Endothelial cell of umbilical vein (primary cell): ENCODE measurements at regions of chrX and their contacts with region 1.

Region 1: DNA sequence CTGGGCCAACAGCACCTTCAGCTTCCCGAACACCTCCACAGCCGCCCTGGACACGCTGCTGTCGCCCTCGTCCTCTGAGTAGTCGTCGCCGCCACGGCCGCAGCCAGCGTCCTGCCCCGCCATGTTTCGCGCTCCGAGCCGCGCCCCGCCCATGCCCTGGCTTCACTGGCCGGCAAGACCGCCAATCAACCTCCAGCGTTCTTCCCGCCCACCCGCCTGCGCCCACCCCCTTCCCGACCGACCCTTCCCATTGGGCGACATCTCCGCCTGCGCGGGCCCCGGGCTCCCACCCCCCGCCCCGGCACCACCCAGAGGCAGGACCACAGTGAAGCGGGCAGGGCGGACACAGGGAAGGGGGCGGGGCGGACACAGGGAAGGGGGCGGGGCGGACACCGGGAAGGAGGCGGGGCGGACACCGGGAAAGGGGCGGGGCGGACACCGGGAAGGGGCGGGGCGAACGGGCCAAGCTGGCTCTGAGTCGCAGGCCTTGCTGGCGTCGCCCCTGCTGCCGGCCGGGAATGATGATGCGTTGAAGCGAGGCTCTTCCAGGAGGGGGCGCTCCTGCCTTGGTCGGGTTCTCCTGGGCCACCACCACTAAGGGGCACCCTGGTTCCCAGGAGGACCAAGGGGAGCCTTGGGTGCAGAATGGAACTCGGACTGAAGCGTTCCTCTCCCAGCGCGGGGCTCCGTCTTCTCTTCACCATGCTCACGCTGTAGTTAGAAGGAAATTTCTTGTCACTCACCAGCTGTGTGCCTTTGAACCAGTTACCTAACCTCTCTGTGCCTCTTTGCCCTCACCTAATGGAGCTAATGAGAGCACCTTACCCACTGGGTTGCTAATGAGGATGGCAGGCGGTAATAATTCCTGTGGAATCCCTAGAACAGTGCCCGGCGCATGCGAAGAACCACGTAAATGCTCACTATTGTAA is at the start of gene HAUS7:
- DNase-seq: peak; percentile 92
- H3K4me3 ChIP-seq: peak within 1 kb of the TSS; percentile 61 to 73 (median 64)
- H3K27ac ChIP-seq: peak within 1 kb of the TSS; percentile 53
- H3K4me1 ChIP-seq: peaks cover 15% of the 10 kb centered on the region
- H3K27me3 ChIP-seq: no peaks in the 10 kb centered on the region
- CTCF ChIP-seq: peak; percentile 51 to 74
- POLR2A ChIP-seq: no peak
- total RNA-seq, gene HAUS7: 30.6 and 46.4 TPM in 2 replicates

Region 2: GRCh38 chrX:152941328-152942106 is 529.2 kb before region 1 on chrX:
- CTCF ChIA-PET with region 1: interaction called, 16 read pairs
- POLR2A ChIA-PET with region 1: no interaction called
- dilution Hi-C with region 1: no loop called
- intact Hi-C with region 1: no loop called
- DNase-seq: peak; percentile 91
- H3K4me3 ChIP-seq: peak overlapping the region; percentile 28 to 74 (median 62)
- H3K27ac ChIP-seq: peak overlapping the region; percentile 46
- H3K4me1 ChIP-seq: peaks cover 13% of the 10 kb centered on the region
- H3K27me3 ChIP-seq: no peaks in the 10 kb centered on the region
- CTCF ChIP-seq: peak; percentile 64 to 81
- POLR2A ChIP-seq: peak; percentile 75

Region 3: GRCh38 chrX:152958524-152959465 is 511.9 kb before region 1 on chrX:
- CTCF ChIA-PET with region 1: no interaction called
- POLR2A ChIA-PET with region 1: no interaction called
- dilution Hi-C with region 1: no loop called
- intact Hi-C with region 1: loop called (anchors 1 kb)
- DNase-seq: peak; percentile 89
- H3K4me3 ChIP-seq: peak overlapping the region in 1 of 3 experiments; percentile 9
- H3K27ac ChIP-seq: peak overlapping the region; percentile 9
- H3K4me1 ChIP-seq: no peaks in the 10 kb centered on the region
- H3K27me3 ChIP-seq: no peaks in the 10 kb centered on the region
- CTCF ChIP-seq: peak; percentile 70 to 71
- POLR2A ChIP-seq: peak; percentile 60

Region 4: GRCh38 chrX:153494541-153495361 is 24.1 kb after region 1 on chrX and contains the start of gene BGN:
- CTCF ChIA-PET with region 1: interaction called, 189 read pairs
- POLR2A ChIA-PET with region 1: interaction called, 9 read pairs
- dilution Hi-C with region 1: no loop called
- intact Hi-C with region 1: loop called (anchors 1 kb)
- DNase-seq: peak; percentile 81
- H3K4me3 ChIP-seq: peak within 1 kb of the TSS; percentile 10 to 78 (median 65)
- H3K27ac ChIP-seq: peak within 1 kb of the TSS; percentile 80
- H3K4me1 ChIP-seq: peaks cover 34% of the 10 kb centered on the region
- H3K27me3 ChIP-seq: no peaks in the 10 kb centered on the region
- CTCF ChIP-seq: peak; percentile 30 to 48
- POLR2A ChIP-seq: peak; percentile 75
- total RNA-seq, gene BGN: 453 and 479 TPM in 2 replicates